ENCODE measurements at regions of chr14 and their contacts with region 1.

Region 1: DNA sequence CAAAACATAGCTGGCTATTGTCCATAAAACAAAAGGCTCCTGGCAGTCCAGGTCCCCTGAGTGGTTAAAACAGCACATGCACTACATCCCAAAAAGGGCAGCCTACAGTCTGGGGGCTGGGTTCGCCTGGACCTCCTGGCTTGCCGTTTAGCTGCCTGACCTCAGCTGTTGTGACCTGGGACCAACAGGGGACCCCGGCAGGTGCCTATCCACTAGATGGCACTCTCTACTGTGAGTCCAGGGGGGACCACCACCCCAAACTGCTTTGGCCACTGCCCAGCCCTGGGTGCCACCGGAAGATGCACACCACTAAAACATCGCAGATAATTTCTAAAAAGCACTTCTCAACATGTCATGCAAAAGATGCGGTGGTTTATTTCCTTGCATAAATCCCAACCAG is 2.9 kb upstream of the RTL1 start:
- DNase-seq: peak in 1 of 2 experiments; percentile 68
- H3K4me3 ChIP-seq: no peak overlapping the region
- H3K27ac ChIP-seq: no peak overlapping the region
- H3K4me1 ChIP-seq: peaks cover 0 to 11% (median 2%) of the 10 kb centered on the region in 4 experiments; a peak in 3 of 7 replicates
- H3K27me3 ChIP-seq: peaks cover 3 to 29% (median 23%) of the 10 kb centered on the region in 4 experiments
- CTCF ChIP-seq: peak; percentile 77 to 82 (median 79)
- EP300 ChIP-seq: no peak
- POLR2A ChIP-seq: no peak
- RAD21 ChIP-seq: peak; percentile 89 to 92

Region 2: GRCh38 chr14:100775831-100776591 is 130.4 kb before region 1 on chr14:
- CTCF ChIA-PET with region 1: no interaction called
- POLR2A ChIA-PET with region 1: no interaction called
- DNase-seq: no peak
- H3K4me3 ChIP-seq: no peak overlapping the region
- H3K27ac ChIP-seq: no peak overlapping the region
- H3K4me1 ChIP-seq: no peaks in the 10 kb centered on the region
- H3K27me3 ChIP-seq: no peaks in the 10 kb centered on the region; a peak in 1 of 7 replicates
- CTCF ChIP-seq: no peak
- EP300 ChIP-seq: no peak
- POLR2A ChIP-seq: no peak
- RAD21 ChIP-seq: no peak

Region 3: GRCh38 chr14:101001311-101002069 is 95.1 kb after region 1 on chr14:
- CTCF ChIA-PET with region 1: no interaction called
- POLR2A ChIA-PET with region 1: no interaction called
- DNase-seq: no peak
- H3K4me3 ChIP-seq: no peak overlapping the region
- H3K27ac ChIP-seq: no peak overlapping the region
- H3K4me1 ChIP-seq: no peaks in the 10 kb centered on the region
- H3K27me3 ChIP-seq: no peaks in the 10 kb centered on the region
- CTCF ChIP-seq: no peak
- EP300 ChIP-seq: no peak
- POLR2A ChIP-seq: no peak
- RAD21 ChIP-seq: no peak

Region 4: DNA sequence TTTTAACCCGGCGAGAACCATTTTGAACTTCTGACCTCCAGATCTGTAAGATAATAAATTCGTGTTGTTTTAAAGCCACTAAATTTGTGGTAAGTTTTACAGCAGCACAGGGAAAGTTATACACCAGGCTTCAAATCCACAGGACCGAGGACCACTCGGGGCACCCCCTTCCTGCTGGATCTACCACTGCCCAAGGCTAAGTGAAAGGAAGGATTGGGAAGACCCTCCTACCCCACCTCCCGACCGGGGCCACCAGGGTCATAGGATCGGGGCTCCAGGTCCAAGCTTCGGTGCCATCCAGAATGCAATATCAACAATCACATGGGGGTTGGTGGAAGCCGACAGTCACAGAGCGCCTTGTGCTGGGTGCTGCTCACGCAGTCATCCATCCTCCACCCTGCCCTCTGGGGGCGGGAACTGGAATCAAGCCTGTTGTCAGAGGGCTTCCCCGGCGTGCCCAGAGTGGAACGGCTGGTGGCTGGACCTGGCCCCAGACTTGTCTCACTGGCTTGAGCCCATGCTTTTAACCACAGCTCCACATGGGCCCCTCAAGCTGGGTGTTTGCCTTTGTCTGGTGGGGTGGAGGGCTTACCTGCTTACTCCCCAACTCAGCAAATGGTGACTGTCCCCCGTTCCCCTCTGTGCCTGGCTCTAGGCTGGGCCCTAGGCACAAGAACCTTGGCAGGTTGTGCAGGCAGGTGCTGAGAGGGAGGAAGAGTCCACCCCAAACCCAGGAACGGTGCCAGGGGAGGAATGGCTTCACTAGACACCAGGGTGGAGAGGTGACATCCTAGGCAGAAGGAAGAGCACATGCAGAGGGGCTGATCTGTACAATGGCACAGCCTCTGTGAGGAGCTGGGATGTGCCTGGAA is 177.4 kb after region 1 on chr14:
- CTCF ChIA-PET with region 1: interaction called, 14 read pairs
- POLR2A ChIA-PET with region 1: no interaction called
- DNase-seq: peak in 1 of 2 experiments; percentile 80
- H3K4me3 ChIP-seq: no peak overlapping the region
- H3K27ac ChIP-seq: no peak overlapping the region
- H3K4me1 ChIP-seq: peaks cover 0 to 1% (median 0%) of the 10 kb centered on the region in 4 experiments; a peak in 2 of 7 replicates
- H3K27me3 ChIP-seq: no peaks in the 10 kb centered on the region
- CTCF ChIP-seq: peak; percentile 68 to 82 (median 79)
- EP300 ChIP-seq: no peak
- POLR2A ChIP-seq: no peak
- RAD21 ChIP-seq: peak; percentile 53 to 71